Left cardiac atrium (tissue), 4 donors: ENCODE measurements at regions of chr12 and their contacts with region 1.

Region 1: DNA sequence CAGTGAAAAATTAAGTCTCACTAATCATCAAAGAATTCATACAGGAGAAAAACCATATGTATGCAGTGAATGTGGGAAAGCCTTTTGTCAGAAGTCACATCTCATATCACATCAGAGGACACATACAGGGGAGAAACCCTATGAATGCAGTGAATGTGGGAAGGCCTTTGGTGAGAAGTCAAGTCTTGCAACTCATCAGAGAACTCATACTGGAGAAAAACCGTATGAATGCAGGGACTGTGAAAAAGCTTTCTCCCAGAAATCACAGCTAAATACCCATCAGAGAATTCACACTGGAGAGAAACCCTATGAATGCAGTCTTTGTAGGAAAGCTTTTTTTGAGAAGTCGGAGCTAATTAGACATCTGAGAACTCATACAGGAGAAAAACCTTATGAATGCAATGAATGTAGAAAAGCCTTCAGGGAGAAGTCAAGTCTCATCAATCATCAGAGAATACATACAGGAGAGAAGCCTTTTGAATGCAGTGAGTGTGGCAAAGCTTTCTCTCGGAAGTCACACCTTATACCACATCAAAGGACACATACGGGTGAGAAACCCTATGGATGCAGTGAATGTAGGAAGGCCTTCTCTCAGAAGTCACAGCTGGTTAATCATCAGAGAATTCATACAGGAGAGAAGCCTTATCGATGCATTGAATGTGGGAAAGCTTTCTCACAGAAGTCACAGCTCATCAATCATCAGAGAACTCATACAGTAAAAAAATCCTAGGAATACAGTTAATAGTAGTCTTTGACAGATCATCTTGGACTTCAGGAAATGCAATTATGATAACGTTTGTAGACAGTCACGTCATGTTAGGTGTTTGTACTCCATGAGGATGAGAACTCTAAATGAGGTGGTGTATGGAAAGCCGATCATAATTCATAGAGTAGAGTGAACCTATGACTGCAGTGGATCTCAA is 21.2 kb downstream of the ZNF84 start:
- DNase-seq: no peak
- ATAC-seq: no peak

Region 2: DNA sequence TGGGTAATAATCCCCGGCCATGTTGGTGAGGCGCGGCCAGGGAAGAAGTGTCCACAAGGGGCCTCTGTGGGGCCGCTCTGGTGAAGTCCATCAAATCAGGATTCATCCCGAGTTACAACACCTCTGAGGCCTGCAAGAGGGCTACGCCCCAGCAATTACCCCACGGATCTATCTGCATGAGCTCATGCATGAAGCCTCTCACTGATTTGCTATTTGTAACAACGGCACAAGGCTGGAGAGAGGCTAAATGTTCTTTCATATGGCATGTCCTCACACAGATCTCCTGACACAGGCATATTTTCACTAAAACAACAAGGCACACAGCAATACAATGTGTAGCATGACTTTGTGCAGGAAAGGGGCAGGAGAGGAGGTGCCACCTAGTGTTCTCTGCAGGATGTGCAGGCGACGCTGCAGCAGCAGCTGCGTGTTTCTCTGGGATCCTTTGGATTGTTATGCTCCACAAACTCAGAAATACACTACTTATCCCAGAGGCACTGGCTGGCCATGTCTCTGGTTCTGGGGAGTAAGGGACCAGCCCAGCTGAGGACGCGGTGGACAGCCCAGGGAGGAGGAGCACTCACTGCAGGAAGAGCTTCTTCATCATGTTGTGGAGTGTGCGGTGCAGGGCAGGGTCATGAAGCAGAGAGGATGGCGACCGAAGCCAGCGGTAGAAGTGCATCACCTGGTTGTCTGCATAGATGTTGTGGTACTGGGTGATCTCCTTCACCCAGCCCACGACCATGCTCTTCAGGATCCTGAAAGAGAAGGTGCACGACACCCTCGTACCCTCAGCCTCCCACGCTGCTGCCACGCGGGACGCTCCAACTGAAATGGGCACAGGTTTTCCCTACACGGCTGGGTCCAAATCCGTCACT is 419.7 kb before region 1 on chr12:
- intact Hi-C with region 1: no loop called
- DNase-seq: no peak
- ATAC-seq: peak; percentile 27 to 83

Region 3: GRCh38 chr12:133120385-133121191 is 62.1 kb after region 1 on chr12:
- intact Hi-C with region 1: loop called in 1 of 2 experiments (anchors 5 kb)
- DNase-seq: no peak
- ATAC-seq: no peak